ENCODE measurements at regions of chr4 and their contacts with region 1.

Region 1: GRCh38 chr4:39446751-39447573 is 11.8 kb downstream of the RPL9 start:
- DNase-seq: peak; percentile 18
- ATAC-seq: peak; percentile 60
- H3K4me3 ChIP-seq: no peak overlapping the region
- H3K27ac ChIP-seq: no peak overlapping the region
- H3K4me1 ChIP-seq: no peaks in the 10 kb centered on the region
- H3K27me3 ChIP-seq: no peaks in the 10 kb centered on the region
- CTCF ChIP-seq: no peak

Region 2: GRCh38 chr4:39020130-39020529 is 426.8 kb before region 1 on chr4:
- CTCF ChIA-PET with region 1: no interaction called
- POLR2A ChIA-PET with region 1: no interaction called
- intact Hi-C with region 1: no loop called
- DNase-seq: no peak
- ATAC-seq: no peak
- H3K4me3 ChIP-seq: no peak overlapping the region
- H3K27ac ChIP-seq: no peak overlapping the region
- H3K4me1 ChIP-seq: no peaks in the 10 kb centered on the region
- H3K27me3 ChIP-seq: no peaks in the 10 kb centered on the region
- CTCF ChIP-seq: no peak

Region 3: DNA sequence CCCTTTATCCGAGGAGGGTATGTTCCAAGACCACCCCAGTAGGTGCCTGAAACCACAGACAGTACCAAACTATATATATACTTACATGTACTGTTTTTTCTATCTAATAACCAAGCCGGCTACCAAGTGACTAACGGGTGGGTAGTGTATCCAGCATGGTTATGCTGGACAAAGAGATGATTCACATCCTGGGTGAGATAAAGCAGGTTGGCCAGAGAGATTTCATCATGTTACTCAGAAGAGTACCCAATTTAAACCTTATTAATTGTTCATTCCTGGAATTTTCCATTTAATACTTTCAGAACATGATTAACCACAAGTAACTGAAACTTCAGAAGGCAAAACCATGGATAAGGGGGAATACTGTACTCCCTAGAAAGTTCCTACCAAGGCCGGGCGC is 127.3 kb before region 1 on chr4:
- CTCF ChIA-PET with region 1: no interaction called
- POLR2A ChIA-PET with region 1: no interaction called
- intact Hi-C with region 1: loop called (anchors 10 kb)
- DNase-seq: peak; percentile 82
- ATAC-seq: peak; percentile 95
- H3K4me3 ChIP-seq: no peak overlapping the region
- H3K27ac ChIP-seq: peak overlapping the region; percentile 62
- H3K4me1 ChIP-seq: peaks cover 24% of the 10 kb centered on the region
- H3K27me3 ChIP-seq: no peaks in the 10 kb centered on the region
- CTCF ChIP-seq: no peak

Region 4: DNA sequence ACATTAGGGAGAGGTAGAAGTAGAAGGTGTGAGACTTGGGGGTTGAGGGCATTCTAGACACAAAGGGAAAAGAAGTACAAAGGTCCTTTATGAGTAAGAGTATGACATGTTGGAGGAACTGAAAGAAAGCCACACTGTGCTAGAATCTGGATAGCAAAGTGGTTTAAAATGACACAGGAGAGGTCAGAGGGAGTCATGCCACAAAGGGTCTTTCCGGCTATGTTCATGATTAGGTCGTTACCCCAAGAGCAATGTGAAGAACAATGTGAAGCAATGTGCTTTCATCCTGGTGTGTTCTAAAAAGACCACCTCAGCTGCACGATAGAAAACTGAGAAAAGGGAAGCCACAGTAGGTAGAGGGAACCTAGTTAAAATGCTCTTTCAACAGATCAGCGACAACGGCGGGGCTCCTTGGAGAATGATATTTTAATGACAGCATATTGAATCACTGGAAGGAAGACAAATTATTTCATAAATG is 162.5 kb after region 1 on chr4:
- CTCF ChIA-PET with region 1: no interaction called
- POLR2A ChIA-PET with region 1: no interaction called
- intact Hi-C with region 1: no loop called
- DNase-seq: peak; percentile 48
- ATAC-seq: peak; percentile 65
- H3K4me3 ChIP-seq: peak overlapping the region; percentile 56
- H3K27ac ChIP-seq: peak overlapping the region; percentile 87
- H3K4me1 ChIP-seq: peaks cover 42% of the 10 kb centered on the region
- H3K27me3 ChIP-seq: no peaks in the 10 kb centered on the region
- CTCF ChIP-seq: no peak

Measured in PC-3 (cell line).